ENCODE measurements at regions of chr2 and their contacts with region 1.

Region 1: DNA sequence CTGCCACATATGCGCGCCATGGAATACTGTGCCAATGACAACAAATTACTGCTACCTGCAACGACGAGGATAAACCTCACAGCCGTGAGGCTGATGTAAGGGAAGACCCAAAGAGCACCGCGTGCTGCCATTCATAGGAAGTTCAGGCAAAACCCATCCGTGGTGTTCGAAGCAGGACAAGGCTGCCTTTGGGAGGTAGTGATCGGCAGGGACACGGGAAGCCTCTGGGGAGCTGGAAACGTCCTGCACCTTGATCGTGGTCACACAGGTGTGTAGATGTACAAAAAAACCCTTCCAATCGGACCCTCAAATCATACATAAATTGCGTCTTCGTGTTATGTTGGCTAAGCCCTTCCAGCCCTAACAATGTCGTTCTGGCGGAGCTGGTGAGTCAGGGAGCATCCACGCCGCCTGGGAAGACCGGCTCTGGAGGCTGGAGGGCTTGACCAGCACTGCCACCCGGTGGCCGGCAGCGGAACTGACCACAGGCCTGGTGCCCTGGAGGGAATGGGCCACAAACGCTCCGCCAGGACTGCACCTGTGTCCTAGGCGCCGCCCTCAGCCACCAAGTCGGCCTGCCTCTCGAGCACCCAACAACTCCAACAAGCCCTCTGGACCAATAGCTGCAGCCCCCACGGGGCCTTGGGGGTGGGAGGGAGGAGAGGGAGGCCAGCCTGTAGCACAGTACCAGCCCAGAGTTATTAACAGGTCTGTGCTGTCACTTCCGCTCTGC is 4.1 kb upstream of the NEURL3 start:
- DNase-seq: peak; percentile 53 to 95
- H3K4me3 ChIP-seq: peak overlapping the region in 1 of 2 donors; percentile 25
- H3K27ac ChIP-seq: no peak overlapping the region
- H3K4me1 ChIP-seq: peaks cover 8 to 15% of the 10 kb centered on the region in 2 donors
- H3K27me3 ChIP-seq: no peaks in the 10 kb centered on the region
- CTCF ChIP-seq: peak; percentile 94 to 98 (median 96)

Region 2: DNA sequence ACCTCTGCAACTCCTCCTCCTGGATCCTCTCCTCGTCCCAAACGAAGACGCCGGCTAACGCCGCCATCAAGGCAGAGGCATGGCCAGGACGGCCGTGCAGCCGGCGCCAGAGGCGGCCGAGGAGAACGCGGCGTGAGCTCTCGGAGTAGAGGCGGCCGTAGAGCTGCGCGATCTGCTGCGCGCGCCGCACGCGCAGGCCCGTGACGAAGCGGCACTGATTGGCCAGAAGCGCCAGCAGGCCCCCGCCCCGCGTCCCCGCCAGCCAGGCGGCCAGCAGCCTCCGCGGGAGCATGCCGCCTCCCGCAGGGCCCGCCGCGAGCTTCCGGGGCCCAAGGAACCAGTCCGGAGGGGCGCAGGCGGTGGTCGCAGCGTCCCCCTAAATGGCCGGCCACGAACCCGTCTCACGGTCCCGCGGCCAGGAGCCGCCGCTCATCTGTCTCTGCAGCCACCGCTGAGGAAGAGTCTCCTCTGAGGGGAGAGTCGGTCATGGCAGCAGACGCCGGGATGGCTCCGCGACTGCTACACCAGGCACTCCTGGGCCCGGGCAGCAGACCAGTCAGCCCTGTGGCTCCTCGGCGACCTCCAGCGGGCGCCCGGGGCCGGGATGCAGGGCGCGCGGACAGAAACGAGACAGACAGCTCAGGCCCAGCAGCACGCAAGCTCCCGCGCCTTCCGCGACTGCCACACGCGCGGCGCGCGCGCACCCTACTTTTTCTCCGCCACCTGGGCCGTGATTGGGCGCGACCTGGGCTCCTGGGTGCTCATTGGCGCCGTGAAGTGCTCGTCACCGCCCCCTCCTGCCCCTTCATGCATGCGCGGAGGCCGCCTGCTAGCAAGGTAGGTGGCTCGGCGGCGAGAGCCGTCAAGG is 300.9 kb before region 1 on chr2 and contains the start of gene STARD7:
- intact Hi-C with region 1: loop called (anchors 2 kb)
- DNase-seq: peak; percentile 93 to 99
- H3K4me3 ChIP-seq: peak within 1 kb of the TSS; percentile 92 to 99
- H3K27ac ChIP-seq: peak within 1 kb of the TSS; percentile 92 to 97
- H3K4me1 ChIP-seq: peaks cover 12 to 39% of the 10 kb centered on the region in 2 donors
- H3K27me3 ChIP-seq: no peaks in the 10 kb centered on the region
- CTCF ChIP-seq: peak in 1 of 3 experiments; percentile 3
- total RNA-seq, gene STARD7: 85.6 TPM

Region 3: GRCh38 chr2:96407041-96407918 is 102.0 kb before region 1 on chr2:
- intact Hi-C with region 1: loop called (anchors 1 kb)
- DNase-seq: peak in 1 of 2 donors; percentile 74
- H3K4me3 ChIP-seq: no peak overlapping the region
- H3K27ac ChIP-seq: no peak overlapping the region
- H3K4me1 ChIP-seq: peaks cover 5 to 32% of the 10 kb centered on the region in 2 donors
- H3K27me3 ChIP-seq: no peaks in the 10 kb centered on the region
- CTCF ChIP-seq: peak; percentile 69 to 84 (median 71)

Region 4: GRCh38 chr2:96527286-96528005 is 18.2 kb after region 1 on chr2:
- intact Hi-C with region 1: loop called (anchors 2 kb)
- DNase-seq: peak in 1 of 2 donors; percentile 86
- H3K4me3 ChIP-seq: peak overlapping the region; percentile 68 to 69
- H3K27ac ChIP-seq: peak overlapping the region; percentile 96 to 99
- H3K4me1 ChIP-seq: peaks cover 30 to 50% of the 10 kb centered on the region in 2 donors
- H3K27me3 ChIP-seq: no peaks in the 10 kb centered on the region
- CTCF ChIP-seq: peak in 2 of 3 experiments; percentile 49 to 56

Region 5: GRCh38 chr2:96554293-96555145 is 45.2 kb after region 1 on chr2:
- intact Hi-C with region 1: loop called (anchors 2 kb)
- DNase-seq: peak in 1 of 2 donors; percentile 89
- H3K4me3 ChIP-seq: peak overlapping the region in 1 of 2 donors; percentile 43
- H3K27ac ChIP-seq: peak overlapping the region in 1 of 2 donors; percentile 20
- H3K4me1 ChIP-seq: peaks cover 0 to 3% of the 10 kb centered on the region in 2 donors
- H3K27me3 ChIP-seq: no peaks in the 10 kb centered on the region
- CTCF ChIP-seq: peak; percentile 96 to 98 (median 98)

Measured in ascending aorta (tissue), 2 donors.